Ascending aorta (tissue), 2 donors: ENCODE measurements at regions of chr12 and their contacts with region 1.

Region 1: GRCh38 chr12:49515266-49515665 is 23.6 kb upstream of the KCNH3 start:
- DNase-seq: no peak
- H3K4me3 ChIP-seq: no peak overlapping the region
- H3K27ac ChIP-seq: no peak overlapping the region
- H3K4me1 ChIP-seq: no peaks in the 10 kb centered on the region
- H3K27me3 ChIP-seq: no peaks in the 10 kb centered on the region
- CTCF ChIP-seq: no peak

Region 2: GRCh38 chr12:49288412-49288853 is 226.8 kb before region 1 on chr12:
- intact Hi-C with region 1: loop called (anchors 5 kb)
- DNase-seq: peak in 1 of 2 donors; percentile 70
- H3K4me3 ChIP-seq: no peak overlapping the region
- H3K27ac ChIP-seq: no peak overlapping the region
- H3K4me1 ChIP-seq: peaks cover 4 to 7% of the 10 kb centered on the region in 2 donors
- H3K27me3 ChIP-seq: no peaks in the 10 kb centered on the region
- CTCF ChIP-seq: peak; percentile 84 to 87 (median 87)

Region 3: DNA sequence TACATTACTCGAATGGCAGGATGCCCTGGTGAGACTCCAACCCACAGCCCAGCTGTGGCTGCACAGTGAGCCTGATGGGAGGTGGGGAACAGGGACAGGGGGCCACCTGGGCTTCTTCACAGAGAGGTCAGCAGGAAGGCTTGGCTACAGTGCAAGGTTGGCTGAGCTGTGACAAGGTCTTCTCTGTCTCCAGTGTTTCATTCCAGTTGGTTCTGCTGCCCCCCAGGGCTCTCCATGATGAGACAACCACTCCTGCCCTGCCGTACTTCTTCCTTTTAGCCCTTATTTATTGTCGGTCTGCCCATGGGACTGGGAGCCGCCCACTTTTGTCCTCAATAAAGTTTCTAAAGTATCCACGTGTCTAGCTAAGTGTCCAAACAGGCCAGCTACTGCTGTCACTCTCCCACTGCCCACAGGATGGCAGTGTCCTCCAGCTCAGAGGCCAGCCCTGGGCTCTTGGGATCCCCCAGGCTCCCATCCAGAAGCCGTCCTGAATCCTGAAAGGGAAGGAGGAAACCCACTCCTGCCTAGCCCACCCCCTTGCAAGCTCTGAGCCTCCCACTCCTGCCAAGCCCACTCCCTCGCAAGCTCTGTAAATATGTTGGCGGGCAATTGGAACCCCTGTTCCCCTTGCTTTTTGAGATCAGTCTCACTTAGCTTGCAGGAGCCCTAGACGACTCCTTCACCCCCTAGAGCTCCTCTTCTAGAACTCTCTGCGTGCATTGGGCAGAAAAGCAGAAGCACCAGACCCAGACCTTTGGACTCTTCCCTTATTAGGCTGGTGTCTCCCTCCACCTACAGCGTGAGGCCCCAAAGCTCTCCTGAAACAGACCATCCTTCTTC is 183.7 kb before region 1 on chr12:
- intact Hi-C with region 1: loop called (anchors 1 kb)
- DNase-seq: peak in 1 of 2 donors; percentile 73
- H3K4me3 ChIP-seq: no peak overlapping the region
- H3K27ac ChIP-seq: no peak overlapping the region
- H3K4me1 ChIP-seq: no peaks in the 10 kb centered on the region
- H3K27me3 ChIP-seq: peaks cover 11% of the 10 kb centered on the region
- CTCF ChIP-seq: peak; percentile 60 to 73 (median 70)

Region 4: DNA sequence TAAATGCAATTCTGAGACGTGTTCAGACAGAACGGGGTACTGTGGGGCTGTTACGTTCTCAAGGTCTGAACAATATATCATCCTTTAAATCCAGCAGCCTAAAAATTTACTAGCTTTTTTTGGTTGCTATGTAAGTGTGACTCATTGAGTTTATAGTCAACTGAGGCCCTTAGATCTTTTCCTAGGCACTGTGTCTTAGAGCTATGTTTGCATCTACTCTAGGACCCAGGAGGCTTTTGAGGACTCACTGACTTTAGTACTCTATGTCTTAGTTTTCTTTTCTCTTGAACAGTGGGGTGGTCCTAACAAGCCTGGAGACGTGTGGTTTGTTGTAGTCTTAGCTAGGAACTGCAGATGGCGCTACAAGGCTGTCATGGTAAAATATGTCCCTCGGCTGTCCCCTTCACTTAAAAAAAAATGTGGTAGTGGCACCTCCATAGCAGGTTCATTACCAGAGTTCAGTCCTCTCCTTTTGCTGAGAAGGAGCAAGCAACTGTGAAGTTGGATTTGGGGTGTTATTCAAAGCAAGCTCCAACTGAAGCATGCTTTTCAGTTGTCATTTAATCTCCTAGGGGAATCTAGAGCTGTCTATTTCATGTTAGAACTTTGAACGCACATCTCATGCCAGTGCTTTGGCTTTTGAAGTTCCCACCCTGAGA is 156.7 kb before region 1 on chr12:
- intact Hi-C with region 1: loop called (anchors 2 kb)
- DNase-seq: no peak
- H3K4me3 ChIP-seq: no peak overlapping the region
- H3K27ac ChIP-seq: no peak overlapping the region
- H3K4me1 ChIP-seq: peaks cover 0 to 3% of the 10 kb centered on the region in 2 donors
- H3K27me3 ChIP-seq: no peaks in the 10 kb centered on the region
- CTCF ChIP-seq: peak; percentile 67 to 81 (median 80)